A549 (cell line): ENCODE measurements at regions of chr5 and their contacts with region 1.

Region 1: DNA sequence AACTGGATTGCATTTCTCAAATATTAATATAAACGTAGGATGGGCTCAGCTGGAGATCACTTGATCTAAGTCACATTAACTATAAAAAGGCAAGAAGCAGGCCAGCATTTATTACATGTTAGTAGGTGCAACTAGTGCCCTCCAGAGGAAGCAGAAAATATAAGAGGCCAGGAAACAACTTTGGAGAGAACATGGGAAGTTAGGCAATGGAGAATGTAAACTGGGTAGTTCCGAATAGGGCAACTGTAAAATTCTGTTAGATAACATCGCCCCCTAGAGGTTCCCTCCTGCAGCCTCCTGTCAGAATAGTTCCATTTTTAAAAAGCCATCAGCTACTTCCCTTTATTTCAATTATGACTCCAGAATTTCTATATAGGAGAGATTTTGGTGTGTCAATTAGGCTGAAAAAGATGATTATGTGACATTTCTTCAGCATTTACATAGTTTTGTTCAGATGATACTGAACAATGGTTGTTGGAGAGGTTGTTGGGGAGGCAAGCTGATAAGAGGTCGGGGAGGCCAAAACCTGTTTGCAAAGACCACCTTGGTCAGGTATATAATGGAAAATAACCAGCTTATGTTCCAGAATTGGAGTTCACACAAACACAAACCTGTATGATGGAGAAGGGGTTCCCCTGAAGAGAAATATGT is 22.4 kb downstream of the CCL28 start:
- DNase-seq: peak; percentile 79 to 91
- ATAC-seq: peak; percentile 95 to 96
- H3K4me3 ChIP-seq: no peak overlapping the region
- H3K27ac ChIP-seq: peak overlapping the region in 1 of 2 experiments; percentile 13; a peak in 1 of 6 replicates
- H3K4me1 ChIP-seq: peaks cover 8% of the 10 kb centered on the region; the same call in 1 of the 3 replicates
- CTCF ChIP-seq: peak; percentile 98
- EP300 ChIP-seq: no peak
- POLR2A ChIP-seq: no peak
- RAD21 ChIP-seq: peak; percentile 90 to 94

Region 2: GRCh38 chr5:43019614-43020293 is 370.1 kb before region 1 on chr5:
- CTCF ChIA-PET with region 1: interaction called, 11 read pairs
- POLR2A ChIA-PET with region 1: no interaction called
- DNase-seq: peak; percentile 51 to 88
- ATAC-seq: peak; percentile 68
- H3K4me3 ChIP-seq: peak overlapping the region; percentile 55
- H3K27ac ChIP-seq: peak overlapping the region; percentile 90 to 96
- H3K4me1 ChIP-seq: peaks cover 24% of the 10 kb centered on the region
- CTCF ChIP-seq: no peak
- EP300 ChIP-seq: no peak
- POLR2A ChIP-seq: no peak
- RAD21 ChIP-seq: no peak

Region 3: GRCh38 chr5:43221116-43221901 is 168.5 kb before region 1 on chr5:
- CTCF ChIA-PET with region 1: interaction called, 41 read pairs
- POLR2A ChIA-PET with region 1: no interaction called
- DNase-seq: no peak
- ATAC-seq: no peak
- H3K4me3 ChIP-seq: no peak overlapping the region
- H3K27ac ChIP-seq: no peak overlapping the region
- H3K4me1 ChIP-seq: no peaks in the 10 kb centered on the region
- CTCF ChIP-seq: no peak
- EP300 ChIP-seq: no peak
- POLR2A ChIP-seq: no peak
- RAD21 ChIP-seq: no peak

Region 4: GRCh38 chr5:43236653-43237355 is 153.0 kb before region 1 on chr5:
- CTCF ChIA-PET with region 1: interaction called, 15 read pairs
- POLR2A ChIA-PET with region 1: no interaction called
- DNase-seq: no peak
- ATAC-seq: no peak; a peak in 1 of 6 replicates
- H3K4me3 ChIP-seq: no peak overlapping the region
- H3K27ac ChIP-seq: no peak overlapping the region
- H3K4me1 ChIP-seq: no peaks in the 10 kb centered on the region
- CTCF ChIP-seq: no peak
- EP300 ChIP-seq: no peak
- POLR2A ChIP-seq: no peak
- RAD21 ChIP-seq: no peak

Region 5: DNA sequence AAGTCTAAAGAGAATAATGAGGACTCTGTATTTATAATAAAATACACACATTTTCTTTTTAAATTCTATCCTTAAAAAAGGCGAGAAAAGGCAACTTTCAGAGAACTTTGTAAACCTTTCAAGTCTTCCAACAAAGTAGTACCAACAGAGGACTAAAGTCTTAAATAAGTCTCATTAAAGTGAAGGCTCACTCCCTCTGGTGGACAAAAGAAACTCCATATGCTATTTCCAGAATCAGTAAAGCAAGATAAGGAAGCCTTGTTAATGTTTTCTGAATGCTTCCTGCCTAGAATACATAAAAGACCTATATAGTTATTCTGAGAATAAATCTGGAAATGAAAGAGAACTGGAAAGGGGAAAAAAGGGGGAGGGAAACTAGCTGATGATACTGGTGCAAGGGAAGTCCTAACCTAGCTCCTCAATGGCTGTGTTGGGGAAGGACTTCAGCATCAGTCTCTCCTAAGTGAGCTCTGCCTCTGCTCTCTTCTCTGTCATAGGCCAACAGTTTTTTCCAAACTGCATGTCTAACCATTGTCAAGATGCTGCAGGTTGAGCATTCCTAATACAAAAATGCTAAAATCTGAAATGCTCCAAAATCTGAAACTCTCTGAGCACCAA is 83.7 kb before region 1 on chr5:
- CTCF ChIA-PET with region 1: interaction called, 34 read pairs
- POLR2A ChIA-PET with region 1: no interaction called
- DNase-seq: peak; percentile 35 to 74
- ATAC-seq: peak; percentile 73 to 89
- H3K4me3 ChIP-seq: no peak overlapping the region
- H3K27ac ChIP-seq: no peak overlapping the region
- H3K4me1 ChIP-seq: peaks cover 38% of the 10 kb centered on the region
- CTCF ChIP-seq: peak; percentile 70
- EP300 ChIP-seq: no peak
- POLR2A ChIP-seq: no peak
- RAD21 ChIP-seq: peak; percentile 49 to 57; a peak in 4 of 5 replicates

Region 6: DNA sequence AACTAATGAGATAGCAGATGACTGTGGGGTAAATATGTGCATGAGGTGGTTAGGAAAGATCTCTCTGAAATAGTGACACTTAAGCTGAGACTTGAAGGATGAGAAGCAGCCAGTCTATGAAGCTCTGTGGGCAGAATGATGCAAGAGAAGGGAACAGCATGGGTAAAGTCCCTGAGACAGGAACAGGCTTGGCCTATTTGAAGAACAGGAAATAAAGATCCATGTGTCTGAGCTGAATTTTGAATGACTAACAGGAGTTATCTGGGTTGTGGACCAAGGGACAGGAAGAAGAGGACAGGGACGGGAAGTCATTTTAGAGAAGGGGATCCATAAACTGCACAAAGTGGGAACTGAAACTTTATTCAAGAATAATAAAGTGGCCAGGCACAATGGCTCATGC is 50.9 kb before region 1 on chr5:
- CTCF ChIA-PET with region 1: interaction called, 10 read pairs
- POLR2A ChIA-PET with region 1: no interaction called
- DNase-seq: no peak
- ATAC-seq: no peak
- H3K4me3 ChIP-seq: no peak overlapping the region
- H3K27ac ChIP-seq: no peak overlapping the region
- H3K4me1 ChIP-seq: no peaks in the 10 kb centered on the region
- CTCF ChIP-seq: no peak
- EP300 ChIP-seq: no peak
- POLR2A ChIP-seq: no peak
- RAD21 ChIP-seq: no peak